Tibial artery (tissue), 4 donors: ENCODE measurements at regions of chr5 and their contacts with region 1.

Region 1: DNA sequence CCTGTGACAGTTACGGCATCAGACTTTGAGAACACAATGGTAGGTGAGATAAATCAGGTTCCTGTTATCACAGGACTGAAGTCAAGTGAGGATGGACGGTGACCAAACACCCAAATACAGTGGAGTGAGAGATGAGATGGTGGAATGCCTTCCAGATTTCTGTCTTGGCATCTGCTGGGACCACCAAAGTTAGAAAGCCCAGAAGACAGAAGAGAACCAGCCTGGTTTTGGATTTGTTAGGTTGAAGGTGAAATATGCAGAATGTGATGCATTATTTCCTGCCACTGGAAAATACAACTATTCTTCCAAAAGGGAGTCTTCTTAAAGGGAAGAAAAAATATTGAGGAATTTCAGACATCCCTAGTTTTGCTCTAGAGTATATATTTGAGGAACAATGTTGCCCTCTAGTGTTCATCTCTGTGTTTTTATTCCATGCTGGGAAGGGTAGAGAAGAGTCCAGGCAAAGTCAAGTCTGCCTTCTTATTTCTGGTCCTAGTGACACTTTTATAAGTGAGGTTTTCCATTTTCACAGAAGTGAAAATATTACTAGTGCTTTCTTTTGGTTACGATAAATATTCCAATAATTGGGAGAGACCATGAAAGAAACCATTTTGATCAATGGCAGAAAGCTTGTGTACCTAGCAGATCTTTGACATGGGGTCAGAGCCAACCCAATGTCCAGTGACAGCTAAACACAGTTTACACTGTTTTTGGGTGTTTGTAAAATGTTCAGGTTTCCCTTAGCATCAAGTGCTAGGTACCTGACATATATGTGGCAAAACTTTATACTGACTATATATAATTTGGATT is 142.3 kb upstream of the ANKH start:
- DNase-seq: no peak
- H3K4me3 ChIP-seq: no peak overlapping the region
- H3K27ac ChIP-seq: no peak overlapping the region
- H3K4me1 ChIP-seq: peaks cover 0 to 37% (median 15%) of the 10 kb centered on the region in 4 donors
- H3K27me3 ChIP-seq: no peaks in the 10 kb centered on the region
- CTCF ChIP-seq: peak; percentile 63 to 77

Region 2: DNA sequence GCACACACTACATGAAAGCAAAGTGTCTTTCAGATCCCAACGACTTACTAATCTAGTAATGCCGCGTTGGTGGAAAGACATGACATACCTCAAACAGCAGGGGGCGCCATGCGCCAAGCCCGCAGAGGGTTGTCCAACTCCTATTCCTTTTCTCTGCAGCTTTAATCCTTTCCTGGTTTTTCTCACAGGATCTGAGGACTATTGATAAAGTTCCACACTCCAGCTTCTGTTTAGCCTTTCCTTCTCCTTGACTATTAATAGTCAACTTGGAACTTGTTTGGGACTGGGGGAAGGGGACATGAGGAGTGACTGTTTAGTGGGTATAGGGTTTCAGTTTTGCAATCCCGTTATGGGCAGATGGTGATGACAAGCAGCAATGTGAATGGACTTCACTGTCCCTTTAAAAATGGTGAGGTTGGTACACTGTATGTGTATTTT is 286.4 kb before region 1 on chr5:
- intact Hi-C with region 1: loop called (anchors 5 kb)
- DNase-seq: peak; percentile 54 to 85
- H3K4me3 ChIP-seq: no peak overlapping the region
- H3K27ac ChIP-seq: peak overlapping the region; percentile 32 to 60
- H3K4me1 ChIP-seq: peaks cover 0 to 26% (median 22%) of the 10 kb centered on the region in 4 donors
- H3K27me3 ChIP-seq: no peaks in the 10 kb centered on the region
- CTCF ChIP-seq: peak; percentile 91 to 95

Region 3: DNA sequence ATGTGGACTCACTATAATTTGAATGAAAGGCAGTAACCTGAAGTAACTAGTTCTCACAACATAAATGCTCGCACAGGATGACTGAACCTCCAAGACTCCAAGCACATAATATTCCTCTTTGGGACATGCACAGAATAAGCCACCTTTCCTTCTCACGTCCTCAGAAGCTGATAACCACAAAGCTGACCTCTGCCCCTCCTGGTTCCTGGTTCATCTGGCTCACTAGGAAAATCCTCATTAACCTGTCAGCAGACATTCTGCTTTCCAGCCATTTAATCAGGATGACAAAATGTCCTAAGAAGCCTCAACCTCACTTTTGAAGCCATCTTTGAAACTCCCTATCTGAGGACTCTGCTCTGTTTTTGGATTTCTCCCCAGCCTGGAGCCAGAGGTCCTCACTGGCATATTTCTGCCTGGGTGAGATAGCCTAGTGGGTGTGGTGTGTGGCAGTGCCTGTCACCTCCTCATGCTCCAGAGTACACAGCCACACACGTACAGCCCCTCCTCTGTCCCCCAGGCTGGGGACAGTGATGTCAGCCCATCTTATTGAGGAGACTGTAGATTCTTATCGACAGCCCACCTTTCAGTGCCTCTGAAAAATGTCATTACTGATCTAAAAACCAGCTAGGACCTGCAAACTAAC is 152.6 kb before region 1 on chr5:
- intact Hi-C with region 1: no loop called
- DNase-seq: no peak
- H3K4me3 ChIP-seq: no peak overlapping the region
- H3K27ac ChIP-seq: peak overlapping the region; percentile 24 to 68
- H3K4me1 ChIP-seq: peaks cover 0 to 69% (median 39%) of the 10 kb centered on the region in 4 donors
- H3K27me3 ChIP-seq: no peaks in the 10 kb centered on the region
- CTCF ChIP-seq: no peak

Region 4: DNA sequence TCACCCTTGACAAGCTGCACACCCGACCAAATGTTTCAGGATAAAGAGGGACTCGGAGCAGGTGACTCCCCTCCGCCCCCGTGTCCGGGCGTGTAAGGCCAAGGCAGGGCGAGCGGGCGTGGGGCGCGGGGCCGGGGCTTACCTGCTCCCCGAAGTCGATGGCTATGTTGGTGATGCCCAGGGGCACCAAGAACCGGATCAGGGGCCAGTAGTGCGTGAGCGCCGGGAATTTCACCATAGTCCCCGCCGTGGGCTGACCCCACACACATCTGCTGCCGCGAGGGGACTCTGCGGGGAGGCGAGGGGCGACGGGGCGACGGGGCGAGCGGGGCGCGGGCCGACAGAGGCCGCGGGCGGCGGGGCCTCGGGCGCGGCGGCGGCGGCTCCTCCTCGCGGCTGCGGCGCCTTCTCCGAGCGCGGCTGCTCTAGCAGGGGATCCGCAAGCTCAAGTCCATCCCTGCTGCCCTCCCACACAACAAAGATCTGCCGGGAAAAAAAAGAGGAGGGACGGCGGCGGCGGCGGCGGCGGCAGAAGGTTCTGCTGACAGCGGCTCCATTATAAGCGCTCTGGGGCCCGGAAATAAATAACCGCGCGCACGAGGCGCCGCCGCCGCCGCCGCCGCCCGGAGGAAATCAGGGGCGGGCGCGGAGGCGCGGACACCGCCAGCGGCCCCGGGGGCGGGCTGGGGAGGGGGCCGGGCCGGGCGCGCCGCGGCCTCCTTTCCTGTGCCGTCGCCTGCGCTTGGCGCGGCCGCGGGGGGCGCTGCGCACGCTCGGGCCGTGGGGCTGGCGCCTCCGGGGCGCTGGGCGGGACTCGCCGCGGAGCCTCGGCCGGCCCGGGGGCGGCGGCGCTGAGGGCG is 142.4 kb before region 1 on chr5 and contains the start of gene ANKH:
- intact Hi-C with region 1: loop called (anchors 5 kb)
- DNase-seq: peak; percentile 69 to 89
- H3K4me3 ChIP-seq: peak within 1 kb of the TSS; percentile 78 to 99
- H3K27ac ChIP-seq: peak within 1 kb of the TSS; percentile 96 to 98
- H3K4me1 ChIP-seq: peaks cover 0 to 27% (median 10%) of the 10 kb centered on the region in 4 donors
- H3K27me3 ChIP-seq: no peaks in the 10 kb centered on the region
- CTCF ChIP-seq: peak in 1 of 2 experiments; percentile 57

Region 5: DNA sequence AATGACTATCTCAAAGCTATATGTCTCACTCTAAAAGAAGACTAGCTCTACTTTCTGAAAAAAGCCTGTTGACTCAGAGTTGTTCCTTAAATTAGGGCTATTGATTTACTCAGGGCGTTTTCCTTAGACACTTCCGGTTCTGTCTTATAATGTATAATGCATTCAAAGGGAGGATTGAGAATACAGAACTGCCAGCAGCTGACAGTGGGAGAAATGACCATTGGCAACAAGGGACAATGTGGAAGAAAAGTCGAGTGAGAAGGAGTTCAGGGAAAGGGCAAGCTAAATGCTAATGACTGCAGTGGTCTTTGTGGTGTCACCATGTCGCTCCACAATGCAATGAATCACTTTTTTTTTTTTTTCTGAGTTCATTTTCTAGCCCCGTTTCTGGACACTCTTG is 76.6 kb before region 1 on chr5:
- intact Hi-C with region 1: no loop called
- DNase-seq: peak in 1 of 2 donors; percentile 28
- H3K4me3 ChIP-seq: no peak overlapping the region
- H3K27ac ChIP-seq: no peak overlapping the region
- H3K4me1 ChIP-seq: no peaks in the 10 kb centered on the region
- H3K27me3 ChIP-seq: no peaks in the 10 kb centered on the region
- CTCF ChIP-seq: no peak